Right ventricle myocardium superior (tissue), 1 donor: ENCODE measurements at regions of chr6 and their contacts with region 1.

Region 1: GRCh38 chr6:49849213-49849907 is 17.0 kb downstream of the CRISP1 start:
- DNase-seq: no peak
- ATAC-seq: peak; percentile 49

Region 2: GRCh38 chr6:49625140-49625539 is 224.2 kb before region 1 on chr6:
- intact Hi-C with region 1: loop called (anchors 10 kb)
- DNase-seq: no peak
- ATAC-seq: no peak

Region 3: DNA sequence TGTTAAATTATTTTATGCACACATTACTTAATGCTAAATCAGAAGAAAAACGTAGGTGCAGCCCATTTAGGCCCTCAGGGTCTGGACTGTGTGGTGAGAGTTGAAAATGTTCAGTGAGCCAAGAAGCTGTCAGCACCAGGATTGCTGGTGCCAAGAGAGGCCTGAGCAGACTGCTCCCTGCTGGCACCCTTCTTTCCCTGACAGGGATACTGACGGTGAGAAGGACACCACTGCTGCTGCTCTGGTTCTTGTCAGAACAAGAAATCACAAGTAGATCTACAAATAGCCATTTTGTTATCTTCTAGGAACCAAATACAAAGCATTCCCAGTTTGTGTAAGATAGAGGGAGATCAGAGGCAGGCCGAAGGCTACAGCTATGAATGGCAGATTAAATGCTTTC is 65.7 kb after region 1 on chr6:
- intact Hi-C with region 1: no loop called
- DNase-seq: peak; percentile 42
- ATAC-seq: peak; percentile 98

Region 4: GRCh38 chr6:50047026-50047425 is 197.7 kb after region 1 on chr6:
- intact Hi-C with region 1: no loop called
- DNase-seq: no peak
- ATAC-seq: no peak